Activated naive CD4-positive, alpha-beta T cell treated with anti-CD3 and anti-CD28 coated beads for 36 hours (primary cell): ENCODE measurements at regions of chr17 and their contacts with region 1.

Region 1: GRCh38 chr17:72618001-72618509 is 474.4 kb downstream of the SLC39A11 start:
- DNase-seq: peak; percentile 27
- H3K4me3 Mint-ChIP-seq: peak overlapping the region; percentile 4
- H3K27ac Mint-ChIP-seq: no peak overlapping the region
- H3K4me1 Mint-ChIP-seq: peaks cover 16% of the 10 kb centered on the region
- H3K27me3 Mint-ChIP-seq: peaks cover 21% of the 10 kb centered on the region

Region 2: DNA sequence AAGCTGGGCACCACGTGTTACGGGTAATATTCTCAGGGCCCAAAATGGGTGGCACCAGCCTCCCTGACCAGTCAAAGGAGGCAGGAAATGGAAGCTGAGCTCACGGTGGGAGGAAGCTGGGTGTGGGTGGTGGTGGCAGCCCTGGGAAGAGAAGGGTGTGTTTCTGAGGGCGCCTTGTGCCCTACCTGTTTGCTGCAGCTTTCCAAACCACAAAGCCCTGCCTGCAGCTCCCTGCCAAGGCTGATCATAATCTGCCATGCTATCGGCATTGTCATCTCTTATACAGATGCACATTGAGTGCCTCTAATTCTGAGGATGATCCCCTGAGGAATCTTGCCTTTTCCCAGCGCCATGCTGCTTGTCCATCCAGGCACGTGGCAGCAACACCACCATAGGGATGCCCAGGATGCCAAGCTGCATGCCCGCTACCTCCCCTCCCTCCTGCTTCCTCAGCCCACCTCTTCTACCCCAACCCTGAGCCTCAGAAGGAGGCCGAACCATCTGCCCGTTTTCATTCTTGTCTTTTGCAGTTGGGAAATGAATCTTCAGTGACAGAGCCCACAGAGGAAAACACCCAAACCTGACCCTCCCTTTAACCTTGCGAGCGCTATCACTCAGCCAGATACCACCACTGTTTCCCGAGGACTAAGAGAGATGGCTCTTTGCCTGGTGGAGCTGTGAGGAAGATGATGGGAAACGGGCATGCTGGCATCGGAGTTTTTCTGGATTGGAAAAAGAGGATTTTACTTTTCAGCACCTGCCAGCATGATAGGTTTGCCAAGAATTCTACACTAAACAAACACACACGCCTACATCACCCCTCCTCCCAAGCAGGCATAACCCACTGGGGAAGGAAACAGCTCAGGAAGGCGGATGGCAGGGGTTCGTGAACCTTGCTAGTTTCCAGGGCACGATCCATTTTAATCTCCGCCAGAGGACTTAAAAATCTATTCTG is 16.9 kb after region 1 on chr17:
- CTCF ChIA-PET with region 1: no interaction called
- intact Hi-C with region 1: loop called (anchors 2 kb)
- DNase-seq: peak; percentile 18
- H3K4me3 Mint-ChIP-seq: no peak overlapping the region
- H3K27ac Mint-ChIP-seq: no peak overlapping the region
- H3K4me1 Mint-ChIP-seq: peaks cover 14% of the 10 kb centered on the region
- H3K27me3 Mint-ChIP-seq: peaks cover 2% of the 10 kb centered on the region